ENCODE measurements at regions of chrX and their contacts with region 1.

Region 1: GRCh38 chrX:47658684-47659515 is at the start of gene UXT:
- DNase-seq: peak; percentile 75 to 92 (median 89)
- ATAC-seq: peak; percentile 91
- H3K4me3 ChIP-seq: peak within 1 kb of the TSS; percentile 86
- H3K4me3 Mint-ChIP-seq: peak within 1 kb of the TSS; percentile 80 to 95 (median 92)
- H3K27ac ChIP-seq: peak within 1 kb of the TSS; percentile 99
- H3K27ac Mint-ChIP-seq: peak within 1 kb of the TSS; percentile 94 to 99 (median 97)
- H3K4me1 ChIP-seq: peaks cover 4 to 8% of the 10 kb centered on the region in 2 donors
- H3K4me1 Mint-ChIP-seq: peaks cover 9 to 34% (median 21%) of the 10 kb centered on the region in 7 donors
- H3K27me3 ChIP-seq: no peaks in the 10 kb centered on the region
- H3K27me3 Mint-ChIP-seq: no peaks in the 10 kb centered on the region
- total RNA-seq, gene UXT: 160 to 235 (median 201) TPM

Region 2: DNA sequence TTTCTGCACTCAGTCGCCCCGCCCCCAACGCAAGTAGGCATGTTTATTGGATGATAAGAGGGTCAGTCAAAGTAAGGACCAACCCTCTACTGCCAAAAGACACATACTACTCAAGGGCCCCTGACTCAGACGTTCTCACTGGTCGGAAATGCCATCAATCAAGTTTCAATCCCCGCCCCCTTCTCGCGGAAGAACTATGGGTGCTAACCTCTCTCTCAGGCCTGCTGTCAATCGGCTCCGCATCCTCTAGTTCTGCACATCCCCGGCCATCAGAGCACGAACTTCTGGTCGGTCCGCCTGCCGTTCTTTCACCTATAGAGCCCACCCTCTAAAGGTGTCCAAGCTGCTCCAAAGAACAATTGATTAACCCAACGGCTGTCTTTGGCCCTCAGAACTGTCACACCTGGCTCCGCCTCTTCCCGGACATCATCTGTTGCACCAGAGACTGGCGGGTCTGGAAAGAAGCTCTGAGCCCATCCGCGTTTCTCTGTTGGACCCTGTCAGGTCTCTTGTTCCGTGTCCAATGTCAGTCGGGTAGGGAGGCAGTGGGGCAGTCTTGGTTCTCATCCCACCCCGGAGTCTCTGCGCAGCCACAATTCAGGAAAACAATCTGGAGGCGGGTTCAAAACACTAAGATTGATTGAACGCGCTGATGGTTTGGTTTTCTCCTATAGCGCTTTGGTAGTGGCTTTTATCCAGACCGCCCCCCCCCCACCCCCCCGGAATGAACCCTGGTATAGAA is 529.6 kb before region 1 on chrX:
- CTCF ChIA-PET with region 1: no interaction called
- POLR2A ChIA-PET with region 1: interaction called, 4 read pairs
- intact Hi-C with region 1: loop called in 1 of 2 experiments (anchors 2 kb)
- DNase-seq: peak; percentile 74 to 94 (median 90)
- ATAC-seq: peak; percentile 99
- H3K4me3 ChIP-seq: peak overlapping the region; percentile 95
- H3K4me3 Mint-ChIP-seq: peak overlapping the region; percentile 76 to 100 (median 97)
- H3K27ac ChIP-seq: peak overlapping the region; percentile 72
- H3K27ac Mint-ChIP-seq: peak overlapping the region; percentile 93 to 99 (median 97)
- H3K4me1 ChIP-seq: no peaks in the 10 kb centered on the region
- H3K4me1 Mint-ChIP-seq: peaks cover 0 to 7% (median 4%) of the 10 kb centered on the region in 7 donors
- H3K27me3 ChIP-seq: no peaks in the 10 kb centered on the region
- H3K27me3 Mint-ChIP-seq: no peaks in the 10 kb centered on the region

Region 3: GRCh38 chrX:47233337-47234113 is 425.4 kb before region 1 on chrX:
- CTCF ChIA-PET with region 1: no interaction called
- POLR2A ChIA-PET with region 1: no interaction called
- intact Hi-C with region 1: loop called (anchors 1 to 5 kb)
- DNase-seq: peak; percentile 71 to 97 (median 94)
- ATAC-seq: peak; percentile 92
- H3K4me3 ChIP-seq: peak overlapping the region; percentile 74
- H3K4me3 Mint-ChIP-seq: peak overlapping the region; percentile 84 to 98 (median 90)
- H3K27ac ChIP-seq: peak overlapping the region; percentile 99
- H3K27ac Mint-ChIP-seq: peak overlapping the region; percentile 94 to 100 (median 98)
- H3K4me1 ChIP-seq: peaks cover 0 to 14% of the 10 kb centered on the region in 2 donors
- H3K4me1 Mint-ChIP-seq: peaks cover 8 to 49% (median 24%) of the 10 kb centered on the region in 7 donors
- H3K27me3 ChIP-seq: no peaks in the 10 kb centered on the region
- H3K27me3 Mint-ChIP-seq: peaks cover 0 to 4% (median 0%) of the 10 kb centered on the region in 5 donors

Region 4: GRCh38 chrX:47581731-47582647 is 76.9 kb before region 1 on chrX and contains the start of gene TIMP1:
- CTCF ChIA-PET with region 1: no interaction called
- POLR2A ChIA-PET with region 1: no interaction called
- intact Hi-C with region 1: loop called in 1 of 2 experiments (anchors 1 kb)
- DNase-seq: peak in 8 of 9 donors; percentile 36 to 80 (median 46)
- ATAC-seq: peak; percentile 93
- H3K4me3 ChIP-seq: peak within 1 kb of the TSS; percentile 52
- H3K4me3 Mint-ChIP-seq: peak within 1 kb of the TSS; percentile 65 to 88 (median 76)
- H3K27ac ChIP-seq: peak within 1 kb of the TSS; percentile 58
- H3K27ac Mint-ChIP-seq: peak within 1 kb of the TSS; percentile 57 to 90 (median 82)
- H3K4me1 ChIP-seq: peaks cover 9 to 17% of the 10 kb centered on the region in 2 donors
- H3K4me1 Mint-ChIP-seq: peaks cover 15 to 40% (median 24%) of the 10 kb centered on the region in 7 donors
- H3K27me3 ChIP-seq: no peaks in the 10 kb centered on the region
- H3K27me3 Mint-ChIP-seq: no peaks in the 10 kb centered on the region
- total RNA-seq, gene TIMP1: 47.0 to 117 (median 85.2) TPM

Region 5: DNA sequence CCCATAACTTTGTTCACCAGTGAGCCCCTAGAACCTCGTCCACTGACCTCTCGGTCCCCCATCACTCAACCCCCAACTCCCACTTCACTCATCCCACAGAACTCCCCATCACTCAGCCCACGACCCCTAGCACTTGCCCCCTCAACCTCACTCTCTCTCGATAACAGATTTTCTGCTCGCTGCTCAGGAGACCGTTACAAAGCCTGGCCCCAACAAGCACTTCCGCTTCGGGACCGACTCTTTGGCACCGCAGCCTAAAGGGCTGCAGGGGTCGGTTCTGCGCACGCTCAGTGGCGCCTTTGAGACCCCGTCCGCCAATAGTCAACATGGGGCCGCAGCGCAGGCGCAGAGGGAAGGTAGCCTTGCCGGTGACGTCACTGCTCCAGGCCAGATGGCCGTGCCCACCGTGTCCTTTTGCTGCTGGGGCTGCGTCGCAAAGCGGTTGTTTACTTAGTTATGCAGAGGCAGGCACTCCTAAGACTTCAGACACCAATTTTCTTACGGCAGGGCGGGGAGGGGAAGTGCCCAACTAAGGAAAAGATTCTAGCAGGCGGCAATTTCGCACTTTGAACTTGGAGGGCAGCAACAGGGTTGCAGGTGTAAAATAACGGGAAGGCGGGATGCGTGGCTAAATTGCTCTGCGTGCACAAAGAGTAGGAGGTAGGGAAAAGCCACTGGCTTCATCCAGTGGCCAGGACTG is 345.0 kb after region 1 on chrX and contains the start of gene ZNF182:
- CTCF ChIA-PET with region 1: no interaction called
- POLR2A ChIA-PET with region 1: no interaction called
- intact Hi-C with region 1: loop called in 1 of 2 experiments (anchors 5 kb)
- DNase-seq: peak; percentile 83 to 93 (median 89)
- ATAC-seq: peak; percentile 94
- H3K4me3 ChIP-seq: peak within 1 kb of the TSS; percentile 90
- H3K4me3 Mint-ChIP-seq: peak within 1 kb of the TSS; percentile 91 to 99 (median 96)
- H3K27ac ChIP-seq: peak within 1 kb of the TSS; percentile 74
- H3K27ac Mint-ChIP-seq: peak within 1 kb of the TSS; percentile 96 to 100 (median 99)
- H3K4me1 ChIP-seq: peaks cover 0 to 10% of the 10 kb centered on the region in 2 donors
- H3K4me1 Mint-ChIP-seq: peaks cover 7 to 34% (median 28%) of the 10 kb centered on the region in 7 donors
- H3K27me3 ChIP-seq: no peaks in the 10 kb centered on the region
- H3K27me3 Mint-ChIP-seq: no peaks in the 10 kb centered on the region
- total RNA-seq, gene ZNF182: 6.6 to 16.7 (median 9.0) TPM

Measured in naive thymus-derived CD4-positive, alpha-beta T cell (primary cell).